Naive thymus-derived CD4-positive, alpha-beta T cell (primary cell): ENCODE measurements at regions of chr22 and their contacts with region 1.

Region 1: GRCh38 chr22:35690001-35690400 is 27.7 kb upstream of the APOL5 start:
- DNase-seq: no peak
- ATAC-seq: no peak
- H3K4me3 ChIP-seq: no peak overlapping the region
- H3K4me3 Mint-ChIP-seq: no peak overlapping the region
- H3K27ac ChIP-seq: no peak overlapping the region
- H3K27ac Mint-ChIP-seq: peak overlapping the region in 1 of 9 donors; percentile 12
- H3K4me1 ChIP-seq: no peaks in the 10 kb centered on the region
- H3K4me1 Mint-ChIP-seq: peaks cover 0 to 7% (median 0%) of the 10 kb centered on the region in 7 donors
- H3K27me3 ChIP-seq: no peaks in the 10 kb centered on the region
- H3K27me3 Mint-ChIP-seq: peaks cover 0 to 2% (median 0%) of the 10 kb centered on the region in 5 donors

Region 2: DNA sequence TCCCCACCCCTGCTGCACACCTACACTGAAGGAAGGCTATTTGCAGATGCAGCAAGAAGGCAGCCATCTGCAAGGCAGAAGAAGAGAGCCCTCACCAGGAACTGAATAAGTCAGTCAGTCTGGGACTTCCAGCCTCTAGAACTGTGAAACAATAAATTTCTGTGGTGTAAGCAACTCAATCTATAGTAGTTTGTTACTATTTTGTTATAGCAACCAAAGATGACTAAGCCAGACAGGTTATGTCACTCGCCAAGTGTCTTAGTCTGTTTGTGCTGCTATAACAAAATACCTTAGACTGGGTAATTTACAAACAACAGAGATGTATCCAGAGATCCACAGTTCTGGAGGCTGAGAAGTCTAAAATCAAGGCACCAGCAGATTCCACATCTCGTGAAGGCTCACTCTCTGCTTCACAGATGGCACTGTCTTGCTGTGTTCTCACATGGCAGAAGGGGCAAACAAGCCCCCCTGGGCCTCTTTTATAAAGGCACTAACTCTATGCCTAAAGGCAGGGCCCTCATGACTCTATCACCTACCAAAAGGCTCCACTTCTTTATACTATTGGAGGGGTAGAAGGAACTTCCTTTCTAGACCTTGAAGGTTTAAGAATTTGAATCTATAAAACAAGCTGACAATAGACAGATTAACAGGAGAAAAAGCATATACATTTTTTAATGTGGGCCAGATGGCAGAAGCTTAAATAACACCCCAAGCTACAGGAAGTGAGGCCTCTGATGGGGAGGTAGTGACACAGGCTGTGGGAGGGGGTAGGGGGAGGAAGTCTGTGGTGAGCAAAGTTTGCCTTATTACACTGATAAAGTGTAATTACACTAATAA is 29.5 kb before region 1 on chr22:
- CTCF ChIA-PET with region 1: interaction called, 3 read pairs
- POLR2A ChIA-PET with region 1: no interaction called
- intact Hi-C with region 1: loop called in 1 of 2 experiments (anchors 2 kb)
- DNase-seq: peak in 8 of 9 donors; percentile 20 to 82 (median 77)
- ATAC-seq: peak; percentile 93
- H3K4me3 ChIP-seq: peak overlapping the region; percentile 5
- H3K4me3 Mint-ChIP-seq: peak overlapping the region; percentile 38 to 81 (median 68)
- H3K27ac ChIP-seq: peak overlapping the region; percentile 85
- H3K27ac Mint-ChIP-seq: peak overlapping the region; percentile 81 to 98 (median 95)
- H3K4me1 ChIP-seq: peaks cover 44 to 58% of the 10 kb centered on the region in 2 donors
- H3K4me1 Mint-ChIP-seq: peaks cover 45 to 80% (median 72%) of the 10 kb centered on the region in 7 donors
- H3K27me3 ChIP-seq: no peaks in the 10 kb centered on the region
- H3K27me3 Mint-ChIP-seq: no peaks in the 10 kb centered on the region

Region 3: DNA sequence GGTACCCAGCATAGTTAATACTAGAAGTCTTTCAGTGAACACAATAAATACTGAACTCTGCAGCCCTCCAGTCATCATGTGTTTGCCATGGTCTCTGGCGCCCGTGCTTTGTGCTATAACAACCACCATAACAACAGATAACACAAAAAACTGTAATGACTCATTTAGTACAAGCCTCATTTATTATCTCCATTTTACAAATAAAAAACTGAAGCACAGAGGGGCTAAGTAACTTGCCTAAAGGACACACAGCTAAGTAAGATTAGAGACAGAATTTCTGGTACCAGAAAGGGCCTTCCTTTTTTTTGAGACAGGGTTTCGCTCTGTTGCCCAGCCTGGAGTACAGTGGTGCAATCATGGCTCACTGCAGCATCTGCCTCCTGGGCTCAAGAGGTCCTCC is 319.1 kb after region 1 on chr22:
- CTCF ChIA-PET with region 1: no interaction called
- POLR2A ChIA-PET with region 1: no interaction called
- intact Hi-C with region 1: no loop called
- DNase-seq: no peak
- ATAC-seq: no peak
- H3K4me3 ChIP-seq: no peak overlapping the region
- H3K4me3 Mint-ChIP-seq: no peak overlapping the region
- H3K27ac ChIP-seq: no peak overlapping the region
- H3K27ac Mint-ChIP-seq: no peak overlapping the region
- H3K4me1 ChIP-seq: no peaks in the 10 kb centered on the region
- H3K4me1 Mint-ChIP-seq: no peaks in the 10 kb centered on the region
- H3K27me3 ChIP-seq: no peaks in the 10 kb centered on the region
- H3K27me3 Mint-ChIP-seq: peaks cover 8 to 32% (median 15%) of the 10 kb centered on the region in 5 donors

Region 4: DNA sequence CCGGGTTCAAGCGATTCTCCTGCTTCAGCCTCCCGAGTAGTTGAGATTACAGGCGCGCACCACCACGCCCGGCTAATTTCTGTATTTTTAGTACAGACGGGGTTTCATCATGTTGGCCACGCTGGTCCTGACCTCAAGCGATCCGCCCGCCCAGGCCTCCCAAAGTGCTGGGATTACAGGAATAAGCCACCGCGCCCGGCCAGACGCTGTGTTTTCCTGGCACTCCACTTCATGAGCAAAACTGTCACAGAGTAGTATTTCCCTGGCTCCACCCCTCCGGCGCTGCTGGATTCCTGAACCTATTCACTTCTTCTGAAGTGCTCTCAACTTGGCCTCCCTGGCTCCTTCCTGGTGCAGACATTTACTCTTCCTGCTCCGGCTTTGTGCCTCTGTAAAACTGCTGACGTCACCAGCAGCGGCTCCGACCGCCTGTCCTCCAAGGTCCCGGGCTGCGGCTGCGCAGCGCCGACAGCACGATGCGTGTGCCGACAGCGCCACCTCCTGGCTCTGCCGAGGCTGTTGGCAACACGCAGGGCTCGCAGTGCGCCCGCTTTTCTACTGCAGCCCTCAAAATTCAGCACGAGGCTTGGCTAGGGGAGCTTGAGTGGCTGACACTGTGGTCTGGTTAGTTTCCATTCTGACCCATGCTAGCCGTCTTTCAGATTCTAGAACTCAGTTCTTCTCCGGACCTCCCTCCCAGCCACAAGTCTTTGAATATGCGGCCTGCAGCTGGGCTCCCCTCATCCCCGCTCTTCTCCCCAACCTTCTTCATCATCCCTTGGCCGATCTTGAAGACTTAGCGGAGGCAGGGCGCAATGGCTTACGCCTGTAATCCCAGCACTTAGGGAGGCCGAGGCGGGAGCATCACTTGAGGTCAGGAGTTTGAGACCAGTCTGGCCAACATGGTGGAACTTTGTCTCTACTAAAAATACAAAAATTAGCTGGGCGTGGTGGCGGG is 434.0 kb after region 1 on chr22:
- CTCF ChIA-PET with region 1: no interaction called
- POLR2A ChIA-PET with region 1: no interaction called
- intact Hi-C with region 1: no loop called
- DNase-seq: peak; percentile 87 to 94 (median 92)
- ATAC-seq: peak; percentile 100
- H3K4me3 ChIP-seq: peak overlapping the region; percentile 45
- H3K4me3 Mint-ChIP-seq: peak overlapping the region; percentile 68 to 89 (median 84)
- H3K27ac ChIP-seq: peak overlapping the region; percentile 63
- H3K27ac Mint-ChIP-seq: peak overlapping the region; percentile 87 to 96 (median 93)
- H3K4me1 ChIP-seq: no peaks in the 10 kb centered on the region
- H3K4me1 Mint-ChIP-seq: peaks cover 8 to 13% (median 11%) of the 10 kb centered on the region in 7 donors
- H3K27me3 ChIP-seq: no peaks in the 10 kb centered on the region
- H3K27me3 Mint-ChIP-seq: peaks cover 0 to 10% (median 0%) of the 10 kb centered on the region in 5 donors